Sciatic nerve (tissue), 2 donors: ENCODE measurements at regions of chr5 and their contacts with region 1.

Region 1: GRCh38 chr5:59380350-59380951 is 513.1 kb downstream of the PDE4D start:
- DNase-seq: no peak
- ATAC-seq: peak; percentile 83

Region 2: DNA sequence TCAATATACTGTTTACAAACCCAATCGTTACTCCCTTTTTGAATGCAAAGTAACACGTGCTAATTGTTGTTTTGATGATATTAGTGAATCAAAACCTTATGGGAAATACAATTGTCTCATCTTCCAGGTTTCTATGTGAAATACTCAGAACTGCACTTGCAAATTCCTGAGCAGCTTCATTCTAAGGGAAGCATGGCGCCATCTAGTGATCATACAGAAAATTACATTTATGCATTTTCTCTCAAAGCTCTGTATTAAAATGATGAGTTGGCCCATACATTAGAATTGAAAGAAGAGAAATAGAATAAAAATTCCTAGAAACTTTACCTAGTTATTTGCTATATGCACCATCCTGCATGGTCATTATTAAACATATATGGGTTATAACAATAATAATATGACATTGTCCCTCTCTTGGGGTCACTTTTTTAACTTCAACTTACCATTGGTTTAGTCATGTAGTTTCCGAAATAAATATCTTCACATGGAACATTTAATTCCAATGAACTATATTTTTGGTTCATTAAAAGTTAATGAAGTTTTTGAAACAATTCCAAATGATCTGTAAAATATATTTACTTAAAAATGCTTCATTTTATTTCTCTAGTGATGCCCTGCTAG is 293.1 kb after region 1 on chr5:
- intact Hi-C with region 1: loop called (anchors 10 kb)
- DNase-seq: no peak
- ATAC-seq: no peak

Region 3: DNA sequence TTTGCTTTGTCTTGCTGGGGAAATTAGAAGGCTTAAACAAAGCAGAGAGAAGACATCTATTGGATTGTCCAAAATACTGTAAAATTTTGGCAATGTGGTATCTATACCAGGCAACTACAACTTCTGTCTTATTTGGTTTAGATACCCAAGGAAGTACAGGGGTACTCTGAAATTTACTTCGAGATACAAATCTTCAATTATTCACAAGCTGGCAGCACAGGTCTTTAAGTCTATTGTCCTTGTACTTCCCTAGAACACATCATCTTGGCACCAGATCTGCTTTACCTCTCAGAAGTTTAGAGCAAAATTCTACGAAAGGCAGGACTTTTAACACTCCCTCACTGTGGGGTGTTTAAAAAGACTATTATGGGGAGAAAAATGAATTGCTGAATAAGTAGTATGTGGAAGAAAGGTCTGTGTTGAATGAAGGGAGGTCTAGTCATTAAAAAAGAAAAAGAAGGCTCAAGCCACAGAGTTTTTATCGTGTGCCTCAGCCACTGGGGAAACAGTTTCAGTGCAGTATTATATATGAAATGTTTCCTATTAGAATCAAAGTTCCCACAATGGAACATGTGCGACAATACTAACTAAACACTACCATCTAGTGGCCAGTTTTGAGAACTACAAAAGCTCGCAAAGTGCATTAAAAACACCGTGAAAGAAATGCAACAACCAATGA is 419.4 kb after region 1 on chr5:
- intact Hi-C with region 1: loop called (anchors 10 kb)
- DNase-seq: no peak
- ATAC-seq: peak; percentile 87

Region 4: DNA sequence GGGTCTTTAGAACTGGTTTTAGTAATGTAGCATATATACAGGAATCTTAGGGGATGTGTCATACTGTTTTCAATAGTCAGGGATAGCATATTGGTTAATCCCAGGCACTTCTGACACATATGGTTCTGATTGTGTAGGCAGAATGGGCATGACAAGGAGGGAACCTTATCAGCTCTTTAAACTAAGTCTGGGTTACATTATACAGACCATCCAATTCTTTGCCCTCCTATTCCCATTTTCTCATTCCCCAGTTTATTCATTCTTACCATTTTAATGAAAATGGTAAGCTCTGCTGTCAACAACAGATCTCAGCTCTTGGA is 1649.7 kb after region 1 on chr5:
- intact Hi-C with region 1: no loop called
- DNase-seq: no peak
- ATAC-seq: no peak